ENCODE measurements at regions of chr9 and their contacts with region 1.

Region 1: GRCh38 chr9:129712634-129713401 is 40.0 kb downstream of the PTGES start:
- DNase-seq: peak in 1 of 2 donors; percentile 80
- H3K4me3 ChIP-seq: peak overlapping the region; percentile 4 to 35
- H3K27ac ChIP-seq: peak overlapping the region; percentile 84 to 91
- H3K4me1 ChIP-seq: peaks cover 31 to 72% of the 10 kb centered on the region in 2 donors
- H3K27me3 ChIP-seq: no peaks in the 10 kb centered on the region
- CTCF ChIP-seq: no peak

Region 2: DNA sequence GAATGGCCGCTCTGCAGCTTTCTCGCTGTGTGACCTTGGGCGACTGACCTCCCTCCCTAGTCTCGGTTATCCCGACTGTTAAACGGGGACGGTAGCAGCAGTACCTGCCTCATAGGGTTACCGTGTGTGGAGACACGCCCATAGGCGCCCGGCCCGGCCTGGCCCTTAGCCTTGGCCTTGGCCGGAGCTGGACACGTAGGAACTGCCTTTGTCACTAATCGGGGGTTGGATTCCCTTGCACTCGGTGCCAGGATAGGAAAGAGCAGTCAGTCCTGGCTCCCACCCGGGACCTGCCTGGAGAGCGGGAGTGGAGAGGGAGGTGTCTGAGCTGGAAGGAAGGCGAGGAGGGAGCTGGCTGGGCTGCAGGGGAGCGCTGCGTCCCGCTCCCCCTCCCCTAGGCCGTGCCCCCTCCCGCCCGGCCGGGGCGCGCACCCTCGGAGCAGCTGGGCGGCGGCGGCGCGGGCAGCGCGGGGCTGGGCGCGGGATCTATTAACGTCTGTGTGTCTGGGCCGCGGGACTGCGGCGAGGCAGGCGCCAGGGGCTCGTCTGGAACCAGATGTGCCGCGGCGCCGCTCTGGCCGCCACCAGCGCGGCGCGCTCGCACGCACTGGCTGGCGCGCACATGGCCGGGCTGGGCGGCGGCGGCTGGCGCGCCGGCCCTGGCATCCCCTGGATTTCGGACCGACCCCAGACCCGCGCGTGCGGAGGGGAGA is 15.7 kb before region 1 on chr9:
- intact Hi-C with region 1: loop called (anchors 1 kb)
- DNase-seq: peak; percentile 46 to 92
- H3K4me3 ChIP-seq: peak overlapping the region; percentile 47 to 51
- H3K27ac ChIP-seq: peak overlapping the region; percentile 94 to 97
- H3K4me1 ChIP-seq: peaks cover 25 to 48% of the 10 kb centered on the region in 2 donors
- H3K27me3 ChIP-seq: no peaks in the 10 kb centered on the region
- CTCF ChIP-seq: peak in 1 of 3 experiments; percentile 12

Region 3: DNA sequence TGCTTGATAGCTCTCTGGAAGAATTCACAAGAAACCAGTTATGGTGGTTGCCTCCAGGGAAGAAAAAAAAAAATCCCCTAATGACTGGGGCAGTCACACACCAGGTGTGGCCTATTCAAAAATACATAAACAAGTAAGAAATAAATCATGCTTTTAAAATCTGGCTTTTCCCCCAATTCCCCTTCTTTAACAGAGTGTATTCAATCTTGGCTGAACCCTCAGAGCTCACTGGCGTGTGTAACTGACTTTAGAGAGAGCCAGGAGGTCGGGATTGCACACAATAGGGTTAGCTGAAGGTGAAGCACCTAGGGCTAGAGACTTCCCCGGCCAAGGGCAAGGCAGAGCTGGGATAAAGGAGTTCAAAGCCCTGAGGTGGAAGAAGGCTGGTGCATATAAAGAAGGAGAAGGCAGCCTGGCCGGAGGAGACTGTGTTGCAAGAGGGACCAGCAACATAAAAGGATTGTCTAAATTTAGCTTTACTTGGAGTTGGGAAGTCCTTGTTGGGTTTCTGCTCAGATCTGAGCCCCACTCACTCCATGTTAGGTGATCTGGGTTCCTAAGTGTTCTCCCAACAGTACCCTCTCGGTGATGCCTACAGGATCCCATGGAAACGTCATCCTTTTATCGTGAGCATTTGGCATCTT is 310.4 kb after region 1 on chr9:
- intact Hi-C with region 1: loop called (anchors 10 kb)
- DNase-seq: peak in 1 of 2 donors; percentile 73
- H3K4me3 ChIP-seq: no peak overlapping the region
- H3K27ac ChIP-seq: peak overlapping the region; percentile 75 to 78
- H3K4me1 ChIP-seq: peaks cover 10 to 63% of the 10 kb centered on the region in 2 donors
- H3K27me3 ChIP-seq: no peaks in the 10 kb centered on the region
- CTCF ChIP-seq: no peak